ENCODE measurements at regions of chr16 and their contacts with region 1.

Region 1: DNA sequence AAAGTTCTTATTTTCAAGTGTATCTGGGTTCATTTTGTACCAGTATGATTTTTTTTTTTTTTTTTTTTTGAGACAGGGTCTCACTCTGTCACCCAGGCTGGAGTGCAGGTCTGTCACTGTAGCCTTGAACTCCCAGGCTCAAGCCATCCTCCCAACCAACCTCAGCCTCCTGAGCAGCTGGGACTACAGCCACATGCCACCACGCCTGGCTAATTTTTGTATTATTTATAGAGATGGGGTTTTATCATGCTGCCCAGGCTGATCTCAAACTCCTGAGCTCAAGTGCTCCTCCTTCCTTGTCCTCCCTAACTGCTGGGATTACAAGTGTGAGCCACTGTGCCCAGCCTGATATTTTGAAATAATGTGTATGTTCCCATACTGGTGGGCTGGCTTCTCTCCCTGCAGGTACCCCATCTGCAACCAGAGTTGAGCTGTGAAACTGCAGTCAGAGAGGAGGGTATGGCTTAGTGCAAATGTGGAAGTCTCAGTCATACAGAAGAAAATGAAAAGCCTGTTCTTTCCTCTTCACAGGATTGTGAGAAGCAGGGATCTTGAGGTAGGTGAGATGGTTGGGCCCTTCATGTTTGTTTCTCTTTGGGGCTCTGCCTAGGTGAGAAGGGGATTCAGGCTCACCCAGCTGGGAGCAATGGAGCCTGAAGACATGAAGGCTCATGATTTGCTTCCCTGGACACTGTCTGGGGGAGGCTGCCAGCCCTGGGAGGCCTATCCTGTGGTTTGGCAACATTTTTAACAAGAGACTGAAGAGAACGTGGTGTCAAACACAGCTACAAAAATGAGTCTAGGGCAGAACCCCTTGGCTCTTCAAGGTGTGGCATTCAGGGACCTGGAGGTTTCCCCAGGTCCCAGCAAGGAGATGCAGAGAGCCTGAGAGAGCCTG is 41.3 kb upstream of the SIAH1 start:
- DNase-seq: no peak
- ATAC-seq: peak; percentile 26; the same call in 1 of the 3 replicates
- H3K4me3 ChIP-seq: no peak overlapping the region
- H3K27ac ChIP-seq: no peak overlapping the region
- H3K4me1 ChIP-seq: peaks cover 7% of the 10 kb centered on the region; the same call in 1 of the 2 replicates
- H3K27me3 ChIP-seq: peaks cover 1 to 7% of the 10 kb centered on the region in 2 experiments; a peak in 1 of 5 replicates
- CTCF ChIP-seq: no peak
- EP300 ChIP-seq: no peak
- POLR2A ChIP-seq: no peak
- RAD21 ChIP-seq: no peak

Region 2: GRCh38 chr16:48244080-48244862 is 182.2 kb before region 1 on chr16 and contains the start of gene LONP2:
- CTCF ChIA-PET with region 1: no interaction called
- POLR2A ChIA-PET with region 1: no interaction called
- in situ Hi-C with region 1: no loop called
- intact Hi-C with region 1: no loop called
- DNase-seq: peak; percentile 87
- ATAC-seq: peak; percentile 96
- H3K4me3 ChIP-seq: peak within 1 kb of the TSS; percentile 93 to 95 (median 93)
- H3K27ac ChIP-seq: peak within 1 kb of the TSS; percentile 85
- H3K4me1 ChIP-seq: peaks cover 34% of the 10 kb centered on the region
- H3K27me3 ChIP-seq: no peaks in the 10 kb centered on the region; a peak in 1 of 5 replicates
- CTCF ChIP-seq: peak; percentile 36
- EP300 ChIP-seq: peak; percentile 32 to 71; a peak in 3 of 4 replicates
- POLR2A ChIP-seq: peak; percentile 81 to 87
- RAD21 ChIP-seq: peak; percentile 20; the same call in 1 of the 2 replicates
- total RNA-seq, gene LONP2: 63.3 and 85.6 TPM in 2 replicates

Region 3: GRCh38 chr16:48444574-48444973 is 18.1 kb after region 1 on chr16:
- CTCF ChIA-PET with region 1: no interaction called
- POLR2A ChIA-PET with region 1: no interaction called
- in situ Hi-C with region 1: no loop called
- intact Hi-C with region 1: loop called (anchors 2 kb)
- DNase-seq: no peak
- ATAC-seq: no peak
- H3K4me3 ChIP-seq: no peak overlapping the region
- H3K27ac ChIP-seq: no peak overlapping the region
- H3K4me1 ChIP-seq: peaks cover 80% of the 10 kb centered on the region
- H3K27me3 ChIP-seq: no peaks in the 10 kb centered on the region
- CTCF ChIP-seq: no peak
- EP300 ChIP-seq: no peak
- POLR2A ChIP-seq: no peak
- RAD21 ChIP-seq: no peak